Thyroid gland (tissue), 4 donors: ENCODE measurements at regions of chr15 and their contacts with region 1.

Region 1: DNA sequence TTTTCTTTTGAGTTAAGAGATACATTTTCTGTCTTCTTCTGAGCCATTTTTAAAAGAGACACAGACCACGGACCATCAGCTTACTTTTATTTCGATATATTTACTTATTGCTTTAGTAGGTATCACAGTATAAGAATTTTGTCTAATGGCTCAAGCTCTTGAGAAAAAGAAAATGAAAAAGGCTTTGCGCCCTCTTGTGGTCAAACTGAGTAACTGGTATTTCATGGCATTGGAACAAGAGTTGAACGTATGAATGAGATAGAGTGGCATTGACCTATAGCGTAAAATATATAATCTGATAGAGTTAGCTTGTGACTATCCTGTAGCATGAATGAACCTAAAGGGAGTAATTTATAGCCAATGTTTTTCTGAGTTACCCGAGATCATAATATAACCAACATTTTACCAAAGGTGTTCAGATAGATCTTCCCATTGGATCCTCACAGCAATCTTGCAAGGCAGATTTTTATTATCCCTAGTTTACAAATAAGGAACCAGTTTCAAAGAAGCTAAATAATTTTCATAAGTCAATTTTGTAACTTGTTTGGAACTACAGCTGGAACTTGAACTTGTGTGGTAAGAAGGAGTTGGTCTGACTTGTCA is 154.6 kb downstream of the POLR2M start:
- DNase-seq: peak; percentile 3 to 15
- H3K4me3 ChIP-seq: no peak overlapping the region
- H3K27ac ChIP-seq: no peak overlapping the region
- H3K4me1 ChIP-seq: no peaks in the 10 kb centered on the region
- H3K27me3 ChIP-seq: no peaks in the 10 kb centered on the region
- CTCF ChIP-seq: peak; percentile 67 to 82 (median 76)
- POLR2A ChIP-seq: no peak

Region 2: DNA sequence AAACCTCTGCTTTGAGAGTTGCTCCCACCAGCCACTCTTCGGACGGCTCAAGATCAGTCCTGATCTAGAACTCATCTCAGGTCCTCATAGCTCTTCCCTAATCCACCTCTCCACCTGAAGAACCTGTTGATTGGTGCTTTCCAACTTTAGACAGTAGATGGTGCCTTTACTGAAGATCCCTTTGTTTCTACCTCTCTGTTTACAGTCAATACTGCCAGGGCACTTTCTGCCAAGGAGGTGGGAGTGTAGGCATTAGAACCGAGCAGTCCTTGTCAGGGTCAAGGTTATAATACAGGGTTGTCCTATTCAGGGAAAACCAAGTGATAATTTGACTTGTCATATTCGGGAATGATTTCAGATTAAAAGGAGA is 483.7 kb before region 1 on chr15:
- intact Hi-C with region 1: no loop called
- DNase-seq: no peak
- H3K4me3 ChIP-seq: peak overlapping the region; percentile 18 to 56 (median 55)
- H3K27ac ChIP-seq: peak overlapping the region; percentile 50 to 89 (median 81)
- H3K4me1 ChIP-seq: peaks cover 26 to 50% of the 10 kb centered on the region in 2 donors
- H3K27me3 ChIP-seq: no peaks in the 10 kb centered on the region
- CTCF ChIP-seq: peak in 1 of 6 experiments; percentile 9
- POLR2A ChIP-seq: no peak

Region 3: DNA sequence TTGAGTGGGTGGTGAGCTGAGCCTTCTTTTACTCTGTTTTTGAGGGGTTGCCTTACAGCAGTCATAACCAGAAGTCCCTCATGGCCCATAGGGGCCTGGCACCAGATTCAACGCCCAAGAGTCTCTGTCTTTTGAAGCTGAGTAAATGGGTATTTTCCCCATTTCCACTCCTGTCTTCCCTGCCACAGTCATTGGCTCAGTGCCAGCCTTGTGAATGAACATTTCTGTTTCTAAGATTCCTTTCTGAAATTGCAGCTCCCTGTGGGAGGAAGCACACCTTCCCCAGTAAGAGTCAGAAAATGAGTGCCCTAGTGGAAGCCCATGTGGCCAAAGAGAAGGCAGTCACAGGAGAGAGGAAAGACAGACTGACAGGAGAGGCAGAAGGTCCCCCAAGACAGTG is 198.3 kb before region 1 on chr15:
- intact Hi-C with region 1: loop called (anchors 5 kb)
- DNase-seq: peak; percentile 48 to 60
- H3K4me3 ChIP-seq: no peak overlapping the region
- H3K27ac ChIP-seq: no peak overlapping the region
- H3K4me1 ChIP-seq: peaks cover 0 to 2% of the 10 kb centered on the region in 2 donors
- H3K27me3 ChIP-seq: no peaks in the 10 kb centered on the region
- CTCF ChIP-seq: no peak
- POLR2A ChIP-seq: no peak

Region 4: DNA sequence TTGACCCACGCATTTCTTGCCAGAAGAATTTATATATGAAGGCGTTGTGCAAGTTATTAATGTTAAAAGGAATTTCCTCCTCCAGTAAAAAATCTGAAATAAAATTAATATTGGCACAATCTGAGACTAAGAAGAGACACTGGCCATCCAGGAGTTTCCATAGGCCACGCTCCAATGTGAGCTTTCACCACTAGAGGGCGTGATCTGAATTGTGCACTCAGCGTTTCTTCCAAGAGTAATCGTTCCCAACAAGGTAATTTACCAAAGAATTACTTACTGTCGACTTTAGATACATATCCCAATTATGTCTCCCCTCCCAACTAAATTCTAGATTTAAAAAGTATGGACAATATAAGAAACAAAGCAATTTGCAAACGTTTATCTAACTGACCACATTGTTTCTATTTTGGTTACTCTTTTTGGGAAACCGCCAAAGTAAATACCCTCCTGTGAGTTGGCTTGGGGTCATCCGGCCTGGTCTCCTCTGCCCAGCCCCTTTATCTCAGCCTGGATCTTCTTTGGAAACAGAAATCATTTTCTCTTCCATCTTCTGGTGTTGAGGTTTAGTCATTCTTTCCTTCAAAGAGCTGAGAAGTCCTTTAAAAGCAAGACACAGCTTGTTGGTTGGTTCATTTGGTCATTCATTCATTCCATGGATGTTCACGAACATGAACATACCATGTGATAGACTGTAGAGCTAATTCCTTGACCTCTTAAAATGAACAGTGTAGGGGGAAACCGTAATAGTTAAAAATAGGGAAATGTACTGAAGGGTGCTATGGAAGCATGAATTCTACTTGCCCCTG is 128.4 kb before region 1 on chr15:
- intact Hi-C with region 1: loop called (anchors 10 kb)
- DNase-seq: peak; percentile 53
- H3K4me3 ChIP-seq: no peak overlapping the region
- H3K27ac ChIP-seq: no peak overlapping the region
- H3K4me1 ChIP-seq: peaks cover 0 to 4% of the 10 kb centered on the region in 2 donors
- H3K27me3 ChIP-seq: no peaks in the 10 kb centered on the region
- CTCF ChIP-seq: peak; percentile 65 to 96 (median 74)
- POLR2A ChIP-seq: no peak